ENCODE measurements at regions of chr2 and their contacts with region 1.

Region 1: GRCh38 chr2:36355151-36355889 is at the start of gene CRIM1:
- DNase-seq: peak; percentile 79
- ATAC-seq: peak; percentile 63
- H3K4me3 ChIP-seq: peak within 1 kb of the TSS; percentile 81 to 98 (median 89)
- H3K27ac ChIP-seq: peak within 1 kb of the TSS; percentile 76
- H3K4me1 ChIP-seq: peaks cover 59% of the 10 kb centered on the region
- H3K27me3 ChIP-seq: no peaks in the 10 kb centered on the region; a peak in 1 of 5 replicates
- CTCF ChIP-seq: no peak
- EP300 ChIP-seq: no peak; a peak in 1 of 4 replicates
- POLR2A ChIP-seq: peak; percentile 91 to 95
- RAD21 ChIP-seq: peak; percentile 53
- total RNA-seq, gene CRIM1: 21.5 and 39.1 TPM in 2 replicates

Region 2: DNA sequence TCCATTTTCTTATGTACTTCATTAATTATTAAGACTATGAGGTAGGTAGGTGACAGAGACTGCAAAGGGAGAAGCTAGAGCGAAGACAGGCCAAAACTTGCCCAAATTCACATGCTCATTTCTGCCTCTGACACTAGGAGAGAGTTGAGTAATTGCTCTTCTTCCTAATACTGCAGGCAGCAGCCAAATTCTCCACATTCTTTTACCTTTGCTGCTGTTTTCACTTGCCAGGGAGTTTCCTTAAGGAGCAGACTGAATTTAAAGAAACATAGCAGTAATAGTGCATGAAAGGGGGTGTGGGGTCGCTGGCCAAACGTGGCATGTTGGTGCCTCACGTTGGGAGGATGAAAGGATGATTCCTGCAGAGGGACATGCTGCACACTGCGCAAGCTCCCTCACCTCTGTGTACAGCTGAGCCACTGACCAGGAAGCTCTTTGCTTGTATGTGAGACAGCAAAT is 12.6 kb after region 1 on chr2:
- CTCF ChIA-PET with region 1: interaction called, 3 read pairs
- POLR2A ChIA-PET with region 1: interaction called, 7 read pairs
- in situ Hi-C with region 1: no loop called
- intact Hi-C with region 1: loop called (anchors 1 kb)
- DNase-seq: no peak
- ATAC-seq: peak; percentile 58
- H3K4me3 ChIP-seq: peak overlapping the region in 1 of 3 experiments; percentile 5; a peak in 1 of 6 replicates
- H3K27ac ChIP-seq: peak overlapping the region; percentile 51
- H3K4me1 ChIP-seq: peaks cover 91% of the 10 kb centered on the region
- H3K27me3 ChIP-seq: no peaks in the 10 kb centered on the region
- CTCF ChIP-seq: no peak
- EP300 ChIP-seq: no peak
- POLR2A ChIP-seq: no peak
- RAD21 ChIP-seq: no peak

Region 3: DNA sequence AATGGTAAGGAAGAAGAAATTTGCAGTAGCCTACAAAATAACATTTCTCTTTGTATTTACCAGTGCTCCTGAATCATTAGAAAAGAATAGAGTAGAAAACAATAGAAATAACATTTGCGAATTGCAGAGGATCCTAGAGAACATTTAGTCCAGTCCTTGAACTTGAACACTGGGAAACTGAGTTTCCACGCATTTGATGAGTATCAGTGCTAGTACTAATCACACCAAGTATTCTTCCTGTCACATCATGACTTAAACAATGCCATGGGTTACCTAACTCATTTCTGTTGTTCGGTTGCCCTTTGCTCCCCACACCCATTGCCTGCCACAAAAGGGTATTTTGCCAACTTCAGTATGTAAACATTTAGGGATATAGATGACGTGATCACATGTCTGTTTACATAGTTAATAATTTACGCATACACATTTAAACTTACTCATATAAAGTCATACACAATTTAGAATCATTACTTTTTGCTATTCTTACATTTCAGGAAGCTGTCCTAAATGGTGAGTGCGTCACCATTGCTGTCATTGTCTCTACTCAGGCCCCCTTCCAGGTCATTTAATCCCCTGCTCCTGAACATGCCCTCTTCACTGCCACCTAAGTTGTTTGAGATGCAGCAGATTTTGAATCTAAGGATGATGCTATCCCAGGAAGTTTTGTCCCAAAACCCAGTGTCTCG is 42.6 kb after region 1 on chr2:
- CTCF ChIA-PET with region 1: no interaction called
- POLR2A ChIA-PET with region 1: interaction called, 3 read pairs
- in situ Hi-C with region 1: no loop called
- intact Hi-C with region 1: loop called (anchors 5 kb)
- DNase-seq: peak; percentile 71
- ATAC-seq: peak; percentile 46
- H3K4me3 ChIP-seq: no peak overlapping the region
- H3K27ac ChIP-seq: peak overlapping the region; percentile 4
- H3K4me1 ChIP-seq: peaks cover 26% of the 10 kb centered on the region
- H3K27me3 ChIP-seq: no peaks in the 10 kb centered on the region
- CTCF ChIP-seq: no peak
- EP300 ChIP-seq: peak in 1 of 2 experiments; percentile 44; a peak in 1 of 4 replicates
- POLR2A ChIP-seq: no peak
- RAD21 ChIP-seq: no peak

Region 4: DNA sequence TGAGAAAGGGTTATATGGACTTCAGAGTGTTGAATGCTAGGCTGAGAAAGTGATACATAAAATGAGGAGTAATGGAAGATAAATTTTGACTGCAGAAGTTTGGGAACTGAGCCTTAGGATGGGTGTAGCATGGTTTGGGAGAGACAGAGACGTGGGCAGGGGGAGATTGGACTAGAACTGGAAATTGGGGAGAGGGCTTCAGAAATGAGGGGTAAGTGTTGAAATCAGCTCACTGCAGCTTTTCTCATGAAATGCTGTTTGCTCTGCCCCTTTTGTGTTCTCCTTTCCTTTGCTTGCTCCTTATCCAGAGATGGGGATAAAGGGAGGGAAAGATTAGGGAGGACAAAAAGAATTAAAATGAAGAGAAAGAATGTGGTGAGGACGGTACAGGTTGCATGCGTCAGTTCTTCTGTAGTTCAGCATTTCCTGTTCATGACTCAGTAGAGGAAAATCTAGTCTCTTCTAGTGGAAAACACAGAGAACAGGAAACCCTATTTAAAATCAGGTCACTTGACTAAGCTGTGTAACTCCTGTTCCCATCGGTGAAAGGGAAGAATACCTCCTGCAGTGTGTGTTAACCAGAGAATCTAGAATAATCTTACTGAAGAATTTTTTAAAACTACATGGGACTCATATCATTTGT is 105.8 kb after region 1 on chr2:
- CTCF ChIA-PET with region 1: interaction called, 18 read pairs
- POLR2A ChIA-PET with region 1: interaction called, 53 read pairs
- in situ Hi-C with region 1: loop called (anchors 5 kb)
- intact Hi-C with region 1: loop called (anchors 1 kb)
- DNase-seq: peak; percentile 46
- ATAC-seq: no peak
- H3K4me3 ChIP-seq: no peak overlapping the region
- H3K27ac ChIP-seq: no peak overlapping the region
- H3K4me1 ChIP-seq: peaks cover 33% of the 10 kb centered on the region
- H3K27me3 ChIP-seq: no peaks in the 10 kb centered on the region
- CTCF ChIP-seq: no peak
- EP300 ChIP-seq: no peak
- POLR2A ChIP-seq: no peak
- RAD21 ChIP-seq: no peak

Region 5: DNA sequence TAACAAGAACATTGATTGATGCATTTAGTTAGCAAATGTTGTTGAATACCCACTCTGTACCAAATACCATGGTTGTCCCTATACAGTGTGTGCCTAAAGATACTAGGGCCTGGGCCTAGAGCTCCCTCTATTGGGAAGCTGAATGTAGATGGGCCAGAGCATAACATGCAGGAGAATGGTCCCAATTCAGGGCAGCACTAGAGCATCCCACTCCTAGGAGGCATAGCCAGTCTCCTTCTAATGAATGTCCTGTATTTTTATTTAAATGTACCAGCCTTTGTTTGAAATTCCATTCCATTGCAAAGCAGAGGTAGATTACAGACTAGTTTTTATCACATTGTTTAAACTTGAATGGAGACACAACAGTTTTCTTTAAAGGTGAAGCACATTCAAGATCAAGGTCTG is 152.1 kb after region 1 on chr2:
- CTCF ChIA-PET with region 1: interaction called, 21 read pairs
- POLR2A ChIA-PET with region 1: interaction called, 11 read pairs
- in situ Hi-C with region 1: loop called (anchors 5 kb)
- intact Hi-C with region 1: loop called (anchors 1 kb)
- DNase-seq: peak; percentile 79
- ATAC-seq: peak; percentile 92
- H3K4me3 ChIP-seq: no peak overlapping the region
- H3K27ac ChIP-seq: no peak overlapping the region
- H3K4me1 ChIP-seq: peaks cover 41% of the 10 kb centered on the region
- H3K27me3 ChIP-seq: no peaks in the 10 kb centered on the region
- CTCF ChIP-seq: peak; percentile 91
- EP300 ChIP-seq: no peak
- POLR2A ChIP-seq: no peak
- RAD21 ChIP-seq: peak; percentile 86

Region 6: GRCh38 chr2:36663851-36664695 is 308.8 kb after region 1 on chr2:
- CTCF ChIA-PET with region 1: no interaction called
- POLR2A ChIA-PET with region 1: interaction called, 3 read pairs
- in situ Hi-C with region 1: loop called (anchors 5 kb)
- intact Hi-C with region 1: loop called (anchors 1 kb)
- DNase-seq: peak; percentile 81
- ATAC-seq: peak; percentile 88
- H3K4me3 ChIP-seq: no peak overlapping the region
- H3K27ac ChIP-seq: no peak overlapping the region
- H3K4me1 ChIP-seq: peaks cover 39% of the 10 kb centered on the region
- H3K27me3 ChIP-seq: no peaks in the 10 kb centered on the region
- CTCF ChIP-seq: peak; percentile 89
- EP300 ChIP-seq: no peak
- POLR2A ChIP-seq: no peak
- RAD21 ChIP-seq: peak; percentile 71

Measured in HepG2 (cell line).